ENCODE measurements at regions of chr4 and their contacts with region 1.

Region 1: GRCh38 chr4:168656055-168656660 is 159.3 kb downstream of the PALLD start:
- DNase-seq: peak; percentile 90
- ATAC-seq: peak; percentile 72
- H3K4me3 ChIP-seq: no peak overlapping the region
- H3K27ac ChIP-seq: peak overlapping the region; percentile 54
- H3K4me1 ChIP-seq: peaks cover 39% of the 10 kb centered on the region
- H3K27me3 ChIP-seq: no peaks in the 10 kb centered on the region
- CTCF ChIP-seq: no peak

Region 2: GRCh38 chr4:168124008-168124641 is 532.0 kb before region 1 on chr4:
- CTCF ChIA-PET with region 1: no interaction called
- POLR2A ChIA-PET with region 1: interaction called, 12 read pairs
- intact Hi-C with region 1: no loop called
- DNase-seq: peak; percentile 72
- ATAC-seq: peak; percentile 90
- H3K4me3 ChIP-seq: no peak overlapping the region
- H3K27ac ChIP-seq: peak overlapping the region; percentile 93
- H3K4me1 ChIP-seq: peaks cover 35% of the 10 kb centered on the region
- H3K27me3 ChIP-seq: no peaks in the 10 kb centered on the region
- CTCF ChIP-seq: no peak

Region 3: GRCh38 chr4:168893807-168894206 is 237.6 kb after region 1 on chr4:
- CTCF ChIA-PET with region 1: no interaction called
- POLR2A ChIA-PET with region 1: no interaction called
- intact Hi-C with region 1: no loop called
- DNase-seq: no peak
- ATAC-seq: no peak
- H3K4me3 ChIP-seq: no peak overlapping the region
- H3K27ac ChIP-seq: no peak overlapping the region
- H3K4me1 ChIP-seq: no peaks in the 10 kb centered on the region
- H3K27me3 ChIP-seq: no peaks in the 10 kb centered on the region
- CTCF ChIP-seq: no peak